Caco-2 (cell line): ENCODE measurements at regions of chr2 and their contacts with region 1.

Region 1: GRCh38 chr2:156589381-156590079 is 153.4 kb downstream of the GPD2 start:
- DNase-seq: peak in 1 of 2 experiments; percentile 33
- H3K4me3 ChIP-seq: no peak overlapping the region
- H3K4me3 Mint-ChIP-seq: no peak overlapping the region
- H3K27ac Mint-ChIP-seq: no peak overlapping the region
- H3K4me1 ChIP-seq: peaks cover 13% of the 10 kb centered on the region; the same call in 1 of the 2 replicates
- H3K4me1 Mint-ChIP-seq: peaks cover 13% of the 10 kb centered on the region
- H3K27me3 ChIP-seq: no peaks in the 10 kb centered on the region
- H3K27me3 Mint-ChIP-seq: no peaks in the 10 kb centered on the region
- CTCF ChIP-seq: peak; percentile 49 to 51

Region 2: GRCh38 chr2:156065905-156066304 is 523.6 kb before region 1 on chr2:
- CTCF ChIA-PET with region 1: no interaction called
- POLR2A ChIA-PET with region 1: no interaction called
- intact Hi-C with region 1: loop called (anchors 1 kb)
- DNase-seq: peak in 1 of 2 experiments; percentile 36
- H3K4me3 ChIP-seq: no peak overlapping the region
- H3K4me3 Mint-ChIP-seq: no peak overlapping the region
- H3K27ac Mint-ChIP-seq: no peak overlapping the region
- H3K4me1 ChIP-seq: no peaks in the 10 kb centered on the region
- H3K4me1 Mint-ChIP-seq: no peaks in the 10 kb centered on the region
- H3K27me3 ChIP-seq: no peaks in the 10 kb centered on the region
- H3K27me3 Mint-ChIP-seq: no peaks in the 10 kb centered on the region
- CTCF ChIP-seq: peak; percentile 39 to 49

Region 3: DNA sequence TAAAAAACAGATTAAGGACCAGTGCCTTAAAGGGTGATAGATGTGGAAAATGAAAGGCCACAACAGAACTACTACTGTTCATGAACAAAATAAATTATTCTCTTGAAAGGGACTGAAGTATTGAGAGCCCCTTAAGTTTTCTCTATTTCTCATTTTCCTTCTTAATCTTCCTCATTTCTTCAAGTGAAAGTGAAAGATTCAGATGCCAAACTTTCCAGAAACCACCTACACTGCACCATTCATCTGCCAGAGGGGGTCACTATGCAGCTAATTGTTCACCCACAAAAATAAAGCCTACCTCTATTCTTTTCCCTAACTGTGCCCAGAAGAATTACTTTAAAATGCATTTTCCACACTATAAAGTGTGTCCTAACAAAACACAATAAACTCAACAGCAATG is 397.1 kb before region 1 on chr2:
- CTCF ChIA-PET with region 1: no interaction called
- POLR2A ChIA-PET with region 1: no interaction called
- intact Hi-C with region 1: loop called (anchors 10 kb)
- DNase-seq: no peak
- H3K4me3 ChIP-seq: no peak overlapping the region
- H3K4me3 Mint-ChIP-seq: no peak overlapping the region
- H3K27ac Mint-ChIP-seq: no peak overlapping the region
- H3K4me1 ChIP-seq: peaks cover 14% of the 10 kb centered on the region; the same call in 1 of the 2 replicates
- H3K4me1 Mint-ChIP-seq: peaks cover 9% of the 10 kb centered on the region
- H3K27me3 ChIP-seq: no peaks in the 10 kb centered on the region
- H3K27me3 Mint-ChIP-seq: no peaks in the 10 kb centered on the region
- CTCF ChIP-seq: no peak

Region 4: GRCh38 chr2:156435715-156436496 is 153.6 kb before region 1 on chr2 and contains the start of gene GPD2:
- CTCF ChIA-PET with region 1: no interaction called
- POLR2A ChIA-PET with region 1: no interaction called
- intact Hi-C with region 1: loop called (anchors 2 kb)
- DNase-seq: peak; percentile 93 to 94
- H3K4me3 ChIP-seq: peak within 1 kb of the TSS; percentile 48
- H3K4me3 Mint-ChIP-seq: peak within 1 kb of the TSS; percentile 90
- H3K27ac Mint-ChIP-seq: peak within 1 kb of the TSS; percentile 83
- H3K4me1 ChIP-seq: peaks cover 27% of the 10 kb centered on the region
- H3K4me1 Mint-ChIP-seq: peaks cover 17% of the 10 kb centered on the region
- H3K27me3 ChIP-seq: no peaks in the 10 kb centered on the region
- H3K27me3 Mint-ChIP-seq: no peaks in the 10 kb centered on the region
- CTCF ChIP-seq: peak in 1 of 2 experiments; percentile 36
- total RNA-seq, gene GPD2: 56.8 and 58.3 TPM in 2 replicates

Region 5: GRCh38 chr2:157055660-157056199 is 466.2 kb after region 1 on chr2:
- CTCF ChIA-PET with region 1: no interaction called
- POLR2A ChIA-PET with region 1: no interaction called
- intact Hi-C with region 1: loop called (anchors 10 kb)
- DNase-seq: peak in 1 of 2 experiments; percentile 13
- H3K4me3 ChIP-seq: no peak overlapping the region
- H3K4me3 Mint-ChIP-seq: no peak overlapping the region
- H3K27ac Mint-ChIP-seq: no peak overlapping the region
- H3K4me1 ChIP-seq: peaks cover 8% of the 10 kb centered on the region
- H3K4me1 Mint-ChIP-seq: peaks cover 7% of the 10 kb centered on the region
- H3K27me3 ChIP-seq: no peaks in the 10 kb centered on the region
- H3K27me3 Mint-ChIP-seq: no peaks in the 10 kb centered on the region
- CTCF ChIP-seq: peak; percentile 40 to 47